ENCODE measurements at regions of chr12 and their contacts with region 1.

Region 1: GRCh38 chr12:92570056-92570753 is 132.6 kb upstream of the PLEKHG7 start:
- DNase-seq: peak in 1 of 2 donors; percentile 60
- H3K4me3 ChIP-seq: no peak overlapping the region
- H3K27ac ChIP-seq: no peak overlapping the region
- H3K4me1 ChIP-seq: no peaks in the 10 kb centered on the region
- H3K27me3 ChIP-seq: no peaks in the 10 kb centered on the region
- CTCF ChIP-seq: peak; percentile 70 to 89

Region 2: GRCh38 chr12:91367234-91367849 is 1202.9 kb before region 1 on chr12:
- intact Hi-C with region 1: loop called (anchors 5 kb)
- DNase-seq: no peak
- H3K4me3 ChIP-seq: no peak overlapping the region
- H3K27ac ChIP-seq: no peak overlapping the region
- H3K4me1 ChIP-seq: no peaks in the 10 kb centered on the region
- H3K27me3 ChIP-seq: no peaks in the 10 kb centered on the region
- CTCF ChIP-seq: peak in 1 of 2 experiments; percentile 17

Region 3: DNA sequence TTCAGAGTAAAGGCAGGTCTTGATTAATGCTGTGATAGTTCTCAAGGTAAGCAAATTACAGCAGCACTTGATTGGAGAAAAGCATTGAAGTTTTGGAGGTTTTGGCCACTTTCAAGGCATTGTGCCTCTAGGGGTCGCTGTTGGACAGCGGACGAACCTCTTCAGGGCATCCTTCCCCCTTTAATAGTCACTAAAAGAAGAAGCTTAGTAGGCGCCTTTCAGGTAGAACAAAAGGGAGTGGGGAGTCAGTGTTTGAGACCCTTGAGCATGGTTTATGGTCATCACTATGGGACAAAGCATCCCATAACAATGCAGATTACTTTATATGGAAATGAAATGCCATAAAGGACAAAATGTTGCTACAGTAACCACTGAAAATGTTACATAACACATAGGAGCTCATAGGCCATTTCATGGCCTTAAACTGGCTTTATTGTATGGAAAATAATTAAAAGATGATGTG is 1188.1 kb before region 1 on chr12:
- intact Hi-C with region 1: loop called (anchors 5 kb)
- DNase-seq: peak; percentile 84 to 86
- H3K4me3 ChIP-seq: peak overlapping the region; percentile 45 to 52
- H3K27ac ChIP-seq: peak overlapping the region; percentile 40 to 51
- H3K4me1 ChIP-seq: peaks cover 0 to 13% (median 4%) of the 10 kb centered on the region in 4 donors
- H3K27me3 ChIP-seq: no peaks in the 10 kb centered on the region
- CTCF ChIP-seq: peak; percentile 86 to 88

Region 4: GRCh38 chr12:91811481-91812287 is 758.5 kb before region 1 on chr12:
- intact Hi-C with region 1: loop called (anchors 5 kb)
- DNase-seq: peak; percentile 80 to 83
- H3K4me3 ChIP-seq: no peak overlapping the region
- H3K27ac ChIP-seq: no peak overlapping the region
- H3K4me1 ChIP-seq: no peaks in the 10 kb centered on the region
- H3K27me3 ChIP-seq: no peaks in the 10 kb centered on the region
- CTCF ChIP-seq: peak; percentile 79 to 81

Region 5: GRCh38 chr12:92445253-92446082 is 124.7 kb before region 1 on chr12:
- intact Hi-C with region 1: no loop called
- DNase-seq: peak in 1 of 2 donors; percentile 22
- H3K4me3 ChIP-seq: no peak overlapping the region
- H3K27ac ChIP-seq: no peak overlapping the region
- H3K4me1 ChIP-seq: peaks cover 0 to 18% (median 4%) of the 10 kb centered on the region in 4 donors
- H3K27me3 ChIP-seq: no peaks in the 10 kb centered on the region
- CTCF ChIP-seq: no peak